Activated CD4-positive, alpha-beta T cell treated with anti-CD3 and anti-CD28 coated beads for 36 hours (primary cell): ENCODE measurements at regions of chr12 and their contacts with region 1.

Region 1: GRCh38 chr12:15789220-15790171 is at the start of gene EPS8:
- DNase-seq: peak; percentile 92
- ATAC-seq: peak; percentile 97
- H3K4me3 Mint-ChIP-seq: peak within 1 kb of the TSS; percentile 74
- H3K27ac Mint-ChIP-seq: peak within 1 kb of the TSS; percentile 39
- H3K4me1 Mint-ChIP-seq: peaks cover 14% of the 10 kb centered on the region
- H3K27me3 Mint-ChIP-seq: peaks cover 50% of the 10 kb centered on the region
- total RNA-seq, gene EPS8: 1.5 to 2.0 TPM

Region 2: DNA sequence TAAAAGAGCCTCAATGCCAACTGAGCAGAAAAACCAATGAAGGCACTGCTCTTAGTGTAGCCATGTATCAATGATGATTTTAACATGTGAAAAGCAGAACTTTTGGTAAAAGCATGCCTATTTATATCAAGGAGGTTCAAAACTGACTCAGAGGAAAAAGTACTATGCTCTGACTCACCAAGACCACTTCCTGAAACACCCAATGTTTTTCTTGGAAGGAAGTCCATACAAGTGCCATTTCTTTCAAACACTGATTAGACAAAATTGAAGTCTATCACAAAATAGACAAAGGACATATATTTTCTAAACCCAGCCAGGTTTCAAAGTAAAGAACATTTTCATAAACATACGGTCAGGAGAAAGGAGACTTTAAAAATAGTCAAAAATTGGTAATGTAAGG is 88.9 kb before region 1 on chr12:
- CTCF ChIA-PET with region 1: no interaction called
- POLR2A ChIA-PET with region 1: no interaction called
- intact Hi-C with region 1: loop called in 1 of 2 experiments (anchors 2 kb)
- DNase-seq: no peak
- ATAC-seq: peak; percentile 83
- H3K4me3 Mint-ChIP-seq: no peak overlapping the region
- H3K27ac Mint-ChIP-seq: peak overlapping the region; percentile 52
- H3K4me1 Mint-ChIP-seq: peaks cover 26% of the 10 kb centered on the region
- H3K27me3 Mint-ChIP-seq: peaks cover 7% of the 10 kb centered on the region

Region 3: DNA sequence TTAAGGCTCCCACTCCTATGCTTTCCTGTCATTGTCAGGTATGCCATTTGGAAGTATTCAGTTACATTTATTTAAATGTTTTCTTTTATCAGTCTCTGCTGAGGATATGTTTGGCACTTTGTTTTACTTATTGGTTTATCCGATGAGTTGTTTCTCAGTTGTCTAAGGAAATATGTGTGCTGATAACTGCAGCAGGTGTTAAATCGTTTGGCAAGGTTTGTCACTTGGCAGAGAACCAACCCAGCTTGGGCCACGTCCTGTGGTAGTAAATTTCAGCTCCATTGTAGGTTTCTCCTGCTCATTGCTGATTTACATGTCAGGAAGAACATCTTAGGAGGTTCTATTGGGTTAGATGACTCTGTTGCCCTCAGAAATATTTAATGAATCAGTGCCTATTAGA is 535.9 kb after region 1 on chr12:
- CTCF ChIA-PET with region 1: no interaction called
- POLR2A ChIA-PET with region 1: no interaction called
- intact Hi-C with region 1: no loop called
- DNase-seq: no peak
- ATAC-seq: no peak
- H3K4me3 Mint-ChIP-seq: no peak overlapping the region
- H3K27ac Mint-ChIP-seq: no peak overlapping the region
- H3K4me1 Mint-ChIP-seq: no peaks in the 10 kb centered on the region
- H3K27me3 Mint-ChIP-seq: no peaks in the 10 kb centered on the region